H1 (cell line): ENCODE measurements at regions of chr2 and their contacts with region 1.

Region 1: GRCh38 chr2:32063310-32064161 is at the start of gene SPAST:
- DNase-seq: peak; percentile 96 to 97
- H3K4me3 ChIP-seq: peak within 1 kb of the TSS; percentile 54 to 83 (median 68)
- H3K27ac ChIP-seq: peak within 1 kb of the TSS; percentile 70; the same call in 1 of the 2 replicates
- H3K4me1 ChIP-seq: peaks cover 0 to 2% (median 0%) of the 10 kb centered on the region in 4 experiments; a peak in 2 of 7 replicates
- H3K27me3 ChIP-seq: no peaks in the 10 kb centered on the region
- CTCF ChIP-seq: peak; percentile 4 to 24 (median 19); a peak in 2 of 4 replicates
- EP300 ChIP-seq: 0 out of 3 replicates have a peak, but pooled peaks of 1 of the 2 experiments have one; percentile 47
- POLR2A ChIP-seq: peak; percentile 91 to 92
- RAD21 ChIP-seq: peak in 1 of 2 experiments; percentile 15; a peak in 2 of 4 replicates
- total RNA-seq, gene SPAST: 31.9 and 36.0 TPM in 2 replicates

Region 2: DNA sequence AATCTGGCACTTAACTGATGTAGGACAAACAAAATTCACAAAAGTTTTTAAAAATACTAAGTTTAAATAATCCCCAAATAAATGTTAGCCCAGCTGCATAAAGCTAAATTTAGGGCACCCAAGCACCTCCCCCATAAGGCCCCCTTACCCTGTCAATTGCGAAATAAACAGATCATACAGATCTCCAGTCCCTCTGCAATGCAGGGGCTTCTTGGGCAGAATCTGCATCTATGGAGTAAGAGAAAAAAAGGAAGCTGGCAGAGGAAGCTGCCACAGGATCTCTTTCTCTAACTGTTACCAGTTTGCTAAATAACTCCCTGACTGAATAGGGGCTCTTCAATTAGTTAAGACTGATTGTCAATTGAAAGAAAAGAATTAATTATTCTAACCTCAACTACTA is 170.4 kb before region 1 on chr2:
- CTCF ChIA-PET with region 1: no interaction called
- POLR2A ChIA-PET with region 1: no interaction called
- DNase-seq: no peak
- H3K4me3 ChIP-seq: no peak overlapping the region; a peak in 1 of 8 replicates
- H3K27ac ChIP-seq: no peak overlapping the region
- H3K4me1 ChIP-seq: peaks cover 0 to 14% (median 10%) of the 10 kb centered on the region in 4 experiments; a peak in 5 of 7 replicates
- H3K27me3 ChIP-seq: no peaks in the 10 kb centered on the region
- CTCF ChIP-seq: no peak
- EP300 ChIP-seq: no peak
- POLR2A ChIP-seq: no peak
- RAD21 ChIP-seq: no peak

Region 3: DNA sequence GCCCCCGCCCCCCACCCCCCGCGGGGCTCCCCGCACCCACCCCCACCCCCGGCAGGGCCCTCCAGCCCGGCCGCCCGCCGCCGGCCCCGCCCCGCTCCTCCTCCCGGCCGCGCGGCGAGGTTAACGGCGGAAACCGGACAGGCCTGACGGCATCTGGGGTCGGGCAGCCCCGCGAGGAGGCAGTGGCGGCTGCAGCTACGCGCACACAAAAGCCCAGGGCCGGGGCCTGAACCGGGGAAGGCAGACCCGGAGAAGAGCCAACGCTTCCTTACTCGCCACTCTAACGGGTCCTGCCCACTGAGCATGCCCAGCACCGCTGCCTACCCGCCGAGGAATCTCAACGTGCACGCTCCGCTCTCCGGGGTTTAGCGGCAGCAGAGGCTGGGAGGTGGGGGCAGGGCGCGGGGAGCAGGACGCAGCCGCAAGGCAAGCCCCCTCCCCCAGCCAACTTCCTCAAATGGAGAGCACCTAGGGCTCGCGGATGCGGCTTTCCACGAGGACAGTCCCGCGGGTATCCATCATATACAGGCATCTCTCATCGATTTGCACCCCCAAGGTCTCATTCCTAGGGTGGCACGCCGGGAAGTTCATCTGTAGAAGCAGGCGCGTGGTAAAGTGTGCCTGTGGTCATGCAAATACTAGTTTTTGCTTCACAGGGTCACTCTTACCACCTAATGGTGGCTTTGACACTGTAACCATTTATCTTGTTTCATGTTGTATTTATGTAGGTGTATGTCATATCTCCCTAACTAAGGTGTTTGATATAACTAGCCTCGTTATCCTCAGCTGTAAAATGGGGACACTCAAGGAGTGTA is 52.7 kb before region 1 on chr2 and contains the start of gene MEMO1:
- CTCF ChIA-PET with region 1: no interaction called
- POLR2A ChIA-PET with region 1: interaction called, 17 read pairs
- DNase-seq: peak; percentile 87 to 94
- H3K4me3 ChIP-seq: peak within 1 kb of the TSS; percentile 58 to 99 (median 81)
- H3K27ac ChIP-seq: peak within 1 kb of the TSS; percentile 84
- H3K4me1 ChIP-seq: peaks cover 0 to 13% (median 3%) of the 10 kb centered on the region in 4 experiments; a peak in 4 of 7 replicates
- H3K27me3 ChIP-seq: no peaks in the 10 kb centered on the region
- CTCF ChIP-seq: no peak
- EP300 ChIP-seq: peak in 1 of 2 experiments; percentile 73; a peak in 1 of 3 replicates
- POLR2A ChIP-seq: peak; percentile 63 to 78
- RAD21 ChIP-seq: peak in 1 of 2 experiments; percentile 6; a peak in 1 of 4 replicates
- total RNA-seq, gene MEMO1: 52.8 and 54.7 TPM in 2 replicates